ENCODE measurements at regions of chr9 and their contacts with region 1.

Region 1: DNA sequence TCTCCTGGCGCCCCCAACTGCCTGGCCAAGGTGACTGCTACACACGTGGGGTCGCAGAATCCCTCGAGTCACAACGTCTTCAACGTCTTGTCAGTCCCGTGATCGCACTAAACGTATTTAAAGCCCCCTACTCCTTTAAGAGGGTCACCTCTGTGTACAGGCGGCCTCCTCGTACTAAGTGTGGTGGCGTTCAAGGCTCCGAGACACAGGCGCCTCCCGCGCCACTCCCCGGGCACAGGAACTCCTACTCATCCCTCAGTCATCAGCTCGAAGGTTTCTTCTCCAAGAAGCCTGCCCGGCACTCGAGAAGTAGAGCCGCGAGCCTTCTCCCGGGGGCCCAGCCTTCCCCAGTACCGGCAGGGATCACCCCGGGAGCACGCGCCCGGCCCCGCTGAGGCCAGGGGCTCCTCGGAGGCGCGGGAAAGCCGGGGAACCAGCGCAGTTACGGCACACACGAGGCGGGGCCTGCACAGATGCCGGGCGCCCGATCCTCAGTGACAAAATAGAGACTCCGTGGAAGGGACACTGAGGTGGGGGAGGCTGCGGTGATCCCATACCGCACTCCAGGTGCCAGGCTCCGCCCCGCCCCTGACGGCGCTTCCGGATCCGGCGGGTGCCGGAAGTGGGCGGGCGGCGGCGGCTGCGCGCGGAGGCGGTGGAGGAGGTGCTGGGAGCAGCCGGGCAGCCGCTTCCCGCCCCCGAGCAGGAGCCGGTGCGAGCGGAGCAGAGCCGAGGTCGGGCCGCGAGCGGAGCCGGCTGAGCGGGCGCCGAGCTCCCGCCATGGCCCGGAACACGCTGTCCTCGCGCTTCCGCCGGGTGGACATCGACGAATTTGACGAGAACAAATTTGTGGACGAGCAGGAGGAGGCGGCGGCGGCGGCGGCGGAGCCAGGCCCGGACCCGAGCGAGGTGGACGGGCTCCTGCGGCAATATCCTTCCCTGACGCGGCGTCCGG is 6.9 kb downstream of the ARPC5L start:
- DNase-seq: peak; percentile 85 to 91
- ATAC-seq: peak; percentile 87 to 94 (median 92)
- H3K4me3 ChIP-seq: peak overlapping the region; percentile 83 to 99 (median 92)
- H3K27ac ChIP-seq: peak overlapping the region; percentile 79 to 98 (median 96)
- H3K4me1 ChIP-seq: peaks cover 28 to 59% (median 50%) of the 10 kb centered on the region in 9 donors
- H3K27me3 ChIP-seq: no peaks in the 10 kb centered on the region
- CTCF ChIP-seq: peak in 2 of 9 donors; percentile 14 to 26

Region 2: GRCh38 chr9:124914753-124915405 is 46.1 kb after region 1 on chr9:
- intact Hi-C with region 1: no loop called
- DNase-seq: no peak
- ATAC-seq: no peak
- H3K4me3 ChIP-seq: no peak overlapping the region
- H3K27ac ChIP-seq: no peak overlapping the region
- H3K4me1 ChIP-seq: no peaks in the 10 kb centered on the region
- H3K27me3 ChIP-seq: no peaks in the 10 kb centered on the region
- CTCF ChIP-seq: no peak

Region 3: GRCh38 chr9:124934290-124934689 is 65.5 kb after region 1 on chr9:
- intact Hi-C with region 1: loop called in 2 of 10 experiments (anchors 10 kb)
- DNase-seq: no peak
- ATAC-seq: no peak
- H3K4me3 ChIP-seq: no peak overlapping the region
- H3K27ac ChIP-seq: no peak overlapping the region
- H3K4me1 ChIP-seq: peaks cover 0 to 10% (median 0%) of the 10 kb centered on the region in 9 donors
- H3K27me3 ChIP-seq: no peaks in the 10 kb centered on the region
- CTCF ChIP-seq: no peak

Region 4: DNA sequence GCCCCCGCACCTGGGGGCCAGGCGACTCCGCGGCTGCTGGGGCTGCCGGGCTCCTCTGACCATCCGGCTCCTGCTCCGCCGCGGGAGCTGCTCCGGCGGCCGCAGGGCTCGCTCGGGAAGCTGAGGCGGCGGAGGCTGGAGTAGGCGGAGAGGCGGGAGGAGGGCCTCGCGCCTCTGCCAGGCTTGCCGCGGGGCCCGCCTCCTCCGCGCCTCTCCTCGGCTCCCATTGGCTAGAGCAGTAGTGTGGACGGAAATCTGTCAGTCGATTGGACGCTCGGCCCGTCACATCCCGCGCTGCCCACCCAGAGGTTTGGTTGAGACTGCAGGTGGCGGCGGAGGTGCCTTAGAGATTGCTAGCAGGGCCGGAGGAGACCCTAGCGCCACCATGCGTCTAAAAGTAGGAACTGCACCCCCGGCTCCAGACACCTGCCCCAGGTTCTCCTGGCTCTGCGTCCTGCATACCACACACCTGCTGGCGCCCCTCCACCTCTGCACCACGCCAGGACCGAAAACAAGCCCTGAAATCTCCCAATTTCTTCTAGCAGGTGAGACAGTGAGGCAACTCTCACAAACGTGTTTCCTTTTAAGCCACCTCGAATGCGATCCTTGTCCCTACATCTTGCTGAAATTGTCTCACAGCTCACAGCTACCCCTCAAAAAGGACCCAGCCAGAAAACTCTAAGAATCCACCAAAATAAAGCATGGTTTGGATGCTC is 274.7 kb after region 1 on chr9 and contains the start of gene SCAI:
- intact Hi-C with region 1: loop called in 1 of 10 experiments (anchors 10 kb)
- DNase-seq: peak; percentile 99
- ATAC-seq: peak; percentile 100
- H3K4me3 ChIP-seq: peak within 1 kb of the TSS; percentile 57 to 78 (median 70)
- H3K27ac ChIP-seq: peak within 1 kb of the TSS in 8 of 10 donors; percentile 58 to 79 (median 67)
- H3K4me1 ChIP-seq: peaks cover 2 to 17% (median 11%) of the 10 kb centered on the region in 9 donors
- H3K27me3 ChIP-seq: no peaks in the 10 kb centered on the region
- CTCF ChIP-seq: peak; percentile 96 to 100 (median 99)
- total RNA-seq, gene SCAI: 2.5 to 4.4 (median 3.6) TPM

Measured in heart right ventricle (tissue), 16 donors.